HepG2 (cell line): ENCODE measurements at regions of chr21 and their contacts with region 1.

Region 1: DNA sequence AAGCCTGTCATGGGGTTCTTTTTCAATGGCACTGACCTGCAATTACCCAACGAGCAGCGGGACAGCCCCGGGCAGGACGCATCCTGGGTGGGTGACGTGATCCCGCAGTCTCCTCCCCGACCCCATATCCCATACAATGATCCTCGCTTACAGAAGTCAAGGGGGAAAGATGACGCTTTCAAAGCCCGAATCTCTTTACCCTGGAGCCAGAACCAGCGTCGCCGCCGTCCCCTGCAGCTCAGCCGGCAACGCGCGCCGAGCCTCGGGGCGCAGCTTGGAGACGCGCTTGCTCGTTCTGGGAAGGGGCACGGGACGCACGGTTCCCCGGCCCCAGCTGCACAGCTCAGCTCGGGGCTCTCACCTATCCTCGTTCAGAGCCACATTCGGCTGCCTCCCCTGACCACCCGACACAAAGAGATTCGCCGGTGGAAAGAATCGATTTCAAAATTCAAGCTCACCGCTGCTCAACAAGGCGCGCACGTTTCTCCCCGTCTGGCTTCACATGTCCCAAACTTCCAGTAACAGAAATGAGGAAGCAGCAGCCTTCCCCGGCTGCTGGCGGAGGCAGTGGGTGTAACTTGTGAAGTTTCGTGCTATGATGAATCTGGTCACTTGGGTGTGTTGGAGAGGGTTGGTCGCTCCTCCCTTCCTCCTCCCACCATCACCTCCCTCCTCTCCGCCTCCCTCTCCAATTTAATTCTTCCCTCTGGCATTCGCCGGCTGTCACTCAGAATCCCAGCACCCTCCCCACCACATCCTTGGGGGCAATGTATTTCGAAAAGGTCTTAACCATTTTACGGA is at the start of gene TIAM1:
- DNase-seq: no peak
- ATAC-seq: no peak
- H3K4me3 ChIP-seq: no peak within 1 kb of the TSS
- H3K27ac ChIP-seq: no peak within 1 kb of the TSS
- H3K4me1 ChIP-seq: no peaks in the 10 kb centered on the region
- H3K27me3 ChIP-seq: peaks cover 0 to 20% of the 10 kb centered on the region in 2 experiments; a peak in 2 of 5 replicates
- CTCF ChIP-seq: no peak
- EP300 ChIP-seq: no peak
- POLR2A ChIP-seq: no peak
- RAD21 ChIP-seq: no peak
- total RNA-seq, gene TIAM1: 0.07 and 0.24 TPM in 2 replicates

Region 2: GRCh38 chr21:31482460-31482859 is 138.6 kb after region 1 on chr21:
- CTCF ChIA-PET with region 1: no interaction called
- POLR2A ChIA-PET with region 1: no interaction called
- in situ Hi-C with region 1: no loop called
- intact Hi-C with region 1: no loop called
- DNase-seq: no peak
- ATAC-seq: no peak
- H3K4me3 ChIP-seq: no peak overlapping the region
- H3K27ac ChIP-seq: no peak overlapping the region
- H3K4me1 ChIP-seq: no peaks in the 10 kb centered on the region
- H3K27me3 ChIP-seq: no peaks in the 10 kb centered on the region
- CTCF ChIP-seq: no peak
- EP300 ChIP-seq: no peak
- POLR2A ChIP-seq: no peak
- RAD21 ChIP-seq: no peak

Region 3: GRCh38 chr21:31580866-31581276 is 237.0 kb after region 1 on chr21:
- CTCF ChIA-PET with region 1: interaction called, 14 read pairs
- POLR2A ChIA-PET with region 1: no interaction called
- in situ Hi-C with region 1: loop called (anchors 10 kb)
- intact Hi-C with region 1: loop called (anchors 1 kb)
- DNase-seq: peak; percentile 46
- ATAC-seq: peak; percentile 95
- H3K4me3 ChIP-seq: no peak overlapping the region
- H3K27ac ChIP-seq: no peak overlapping the region
- H3K4me1 ChIP-seq: no peaks in the 10 kb centered on the region
- H3K27me3 ChIP-seq: 0 out of 5 replicates have a peak, but pooled peaks cover 0 to 3% of the 10 kb centered on the region in 2 experiments
- CTCF ChIP-seq: peak; percentile 81
- EP300 ChIP-seq: no peak
- POLR2A ChIP-seq: no peak
- RAD21 ChIP-seq: peak; percentile 26; the same call in 1 of the 2 replicates

Region 4: DNA sequence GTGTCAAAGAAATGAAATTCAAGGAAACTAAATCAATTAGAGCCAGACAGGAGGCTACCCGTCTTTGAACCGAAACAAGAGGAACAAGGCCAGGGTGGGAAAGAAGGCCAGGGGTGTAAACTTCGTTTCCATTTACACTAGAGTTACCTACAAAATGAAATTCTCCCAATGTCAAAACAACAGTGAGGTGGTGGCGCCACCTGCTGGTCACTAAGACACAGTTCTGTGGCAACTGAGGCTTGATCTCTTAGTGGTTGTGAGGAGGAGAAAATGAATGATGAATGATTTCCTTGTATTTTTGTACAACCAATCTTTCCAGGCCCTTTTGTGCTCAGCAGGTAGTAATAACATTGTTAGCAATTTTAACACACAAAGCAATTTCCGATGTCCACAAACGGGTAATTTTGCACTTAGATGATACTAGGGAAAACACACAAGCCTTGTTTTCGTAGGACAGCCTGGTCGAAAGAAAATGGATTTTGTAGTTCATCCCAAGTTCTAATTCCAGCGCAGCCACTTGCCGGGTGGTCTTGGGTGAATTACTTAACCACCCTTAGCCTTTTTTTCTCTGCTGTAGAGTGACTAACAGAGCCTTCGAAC is 260.8 kb after region 1 on chr21:
- CTCF ChIA-PET with region 1: no interaction called
- POLR2A ChIA-PET with region 1: no interaction called
- in situ Hi-C with region 1: no loop called
- intact Hi-C with region 1: loop called (anchors 1 kb)
- DNase-seq: peak; percentile 41
- ATAC-seq: peak; percentile 88
- H3K4me3 ChIP-seq: no peak overlapping the region
- H3K27ac ChIP-seq: no peak overlapping the region
- H3K4me1 ChIP-seq: no peaks in the 10 kb centered on the region
- H3K27me3 ChIP-seq: no peaks in the 10 kb centered on the region
- CTCF ChIP-seq: peak; percentile 83
- EP300 ChIP-seq: no peak
- POLR2A ChIP-seq: no peak
- RAD21 ChIP-seq: 0 out of 2 replicates have a peak, but pooled peaks have one; percentile 17